ENCODE measurements at regions of chr3 and their contacts with region 1.

Region 1: GRCh38 chr3:192917404-192918274 is at the start of gene MB21D2:
- DNase-seq: peak; percentile 88
- ATAC-seq: peak; percentile 94
- total RNA-seq, gene MB21D2: 2.1 TPM

Region 2: DNA sequence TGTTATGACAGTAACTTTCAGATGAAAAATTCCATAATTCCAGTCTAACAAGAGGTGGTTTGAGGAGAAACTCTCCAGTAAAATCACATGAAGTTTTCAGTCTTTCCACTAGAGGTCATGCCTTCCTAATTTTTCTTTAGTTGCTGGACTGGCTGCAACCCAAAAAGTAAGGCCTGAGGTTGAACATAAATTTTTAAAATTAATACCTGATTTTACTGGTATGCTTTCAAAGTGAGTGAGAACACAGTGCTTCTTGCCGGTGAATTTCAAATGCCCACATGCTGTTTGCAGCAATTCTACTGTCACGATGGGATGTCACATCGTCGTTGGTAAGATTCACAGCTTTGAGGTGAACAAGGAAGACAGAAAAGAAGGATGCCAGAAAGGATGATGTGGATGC is 101.3 kb before region 1 on chr3:
- intact Hi-C with region 1: loop called (anchors 2 kb)
- DNase-seq: no peak
- ATAC-seq: no peak

Region 3: GRCh38 chr3:192831111-192831644 is 86.5 kb before region 1 on chr3:
- intact Hi-C with region 1: loop called (anchors 5 kb)
- DNase-seq: no peak
- ATAC-seq: no peak

Region 4: DNA sequence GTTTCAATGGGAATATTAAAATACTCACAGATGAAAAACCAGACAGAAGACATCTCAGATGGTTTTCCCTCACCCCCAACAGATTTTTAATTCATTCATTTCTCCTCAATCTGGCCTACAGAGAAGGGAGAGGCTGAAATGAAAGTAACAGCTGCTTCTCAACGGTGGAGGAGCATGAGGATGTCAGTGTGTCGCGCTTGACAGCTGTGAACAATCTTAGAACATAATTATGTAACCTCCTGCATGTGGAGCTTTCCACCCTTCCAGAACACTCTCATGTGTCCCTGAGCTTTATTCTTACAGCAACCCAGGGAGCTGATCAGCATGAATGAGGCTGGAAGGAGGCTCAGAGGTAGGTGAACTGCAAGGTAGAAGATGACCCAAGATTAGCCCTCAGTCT is 52.7 kb before region 1 on chr3:
- intact Hi-C with region 1: loop called (anchors 2 kb)
- DNase-seq: no peak
- ATAC-seq: peak; percentile 78

Region 5: GRCh38 chr3:192892981-192893700 is 24.5 kb before region 1 on chr3:
- intact Hi-C with region 1: no loop called
- DNase-seq: no peak
- ATAC-seq: peak; percentile 58

Region 6: DNA sequence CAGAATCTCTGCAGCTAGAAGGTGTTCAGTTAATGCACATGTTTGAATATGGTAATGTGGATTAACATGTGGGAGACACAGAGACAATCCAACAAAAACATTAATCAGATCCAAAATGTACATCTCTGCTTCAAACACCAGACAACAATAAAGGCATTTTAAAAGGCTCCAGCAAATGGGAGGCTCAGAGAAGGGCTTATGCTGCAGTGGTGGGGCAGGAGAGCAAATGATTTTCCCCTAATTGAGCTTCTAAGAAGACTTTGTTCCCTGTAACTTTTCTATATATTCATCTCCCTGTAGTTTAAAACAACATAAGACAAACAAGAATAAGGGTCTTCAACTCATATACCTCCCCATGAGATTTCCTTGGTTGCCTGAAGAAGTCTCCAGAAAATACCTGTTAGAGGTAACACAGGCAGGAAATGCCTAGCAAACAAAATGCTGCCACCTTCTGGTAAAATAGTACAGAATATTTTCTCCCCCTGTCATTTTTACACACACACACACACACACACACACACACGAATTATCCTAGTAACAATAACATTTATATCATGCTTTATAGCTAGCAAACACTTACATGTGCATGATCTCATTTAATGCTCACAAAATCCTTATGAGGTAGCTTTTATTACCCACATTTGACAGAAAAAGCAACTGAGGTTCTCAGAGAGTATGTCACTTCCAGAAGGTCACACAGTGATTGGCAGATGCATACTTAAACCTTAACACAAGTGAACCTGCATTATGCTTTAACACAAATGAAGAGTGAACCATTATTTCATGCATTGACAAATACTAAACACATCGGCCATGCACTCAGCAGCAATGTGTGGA is 123.4 kb after region 1 on chr3:
- intact Hi-C with region 1: loop called (anchors 2 kb)
- DNase-seq: no peak
- ATAC-seq: no peak

Region 7: DNA sequence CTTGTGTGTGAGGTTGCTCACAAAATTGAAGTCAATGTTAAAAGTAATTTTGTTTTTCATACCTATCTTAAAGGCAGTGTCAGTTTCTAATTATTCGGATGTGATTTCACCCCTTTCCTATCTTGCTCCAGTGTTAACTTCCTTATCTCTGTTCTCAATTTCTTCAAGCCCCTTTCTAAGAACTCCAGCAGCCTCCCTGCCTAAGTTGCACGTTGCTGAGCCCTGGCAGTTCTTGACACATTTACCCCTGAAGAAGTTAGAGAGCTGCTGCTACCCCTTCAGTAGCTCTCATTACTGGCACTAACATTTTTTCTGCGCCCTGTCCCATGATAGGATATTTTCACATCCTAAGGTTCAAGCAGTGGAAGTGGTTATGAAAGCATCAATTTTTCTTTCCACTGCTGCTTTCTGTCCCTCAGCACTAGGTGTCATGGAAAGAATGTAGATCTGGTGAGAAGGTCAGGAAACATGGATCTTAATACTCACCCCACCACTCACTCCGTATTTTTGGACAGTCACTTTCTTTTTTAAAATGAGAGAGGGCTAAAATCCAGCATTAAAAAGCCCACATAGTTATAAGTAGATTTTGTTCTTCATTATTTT is 738.3 kb after region 1 on chr3:
- intact Hi-C with region 1: no loop called
- DNase-seq: no peak
- ATAC-seq: no peak